PC-9 (cell line): ENCODE measurements at regions of chr1 and their contacts with region 1.

Region 1: GRCh38 chr1:172826096-172826743 is 167.3 kb downstream of the FASLG start:
- DNase-seq: peak; percentile 10 to 51
- H3K4me3 ChIP-seq: no peak overlapping the region
- H3K27ac ChIP-seq: no peak overlapping the region
- H3K4me1 ChIP-seq: no peaks in the 10 kb centered on the region
- H3K27me3 ChIP-seq: no peaks in the 10 kb centered on the region
- CTCF ChIP-seq: peak; percentile 76

Region 2: DNA sequence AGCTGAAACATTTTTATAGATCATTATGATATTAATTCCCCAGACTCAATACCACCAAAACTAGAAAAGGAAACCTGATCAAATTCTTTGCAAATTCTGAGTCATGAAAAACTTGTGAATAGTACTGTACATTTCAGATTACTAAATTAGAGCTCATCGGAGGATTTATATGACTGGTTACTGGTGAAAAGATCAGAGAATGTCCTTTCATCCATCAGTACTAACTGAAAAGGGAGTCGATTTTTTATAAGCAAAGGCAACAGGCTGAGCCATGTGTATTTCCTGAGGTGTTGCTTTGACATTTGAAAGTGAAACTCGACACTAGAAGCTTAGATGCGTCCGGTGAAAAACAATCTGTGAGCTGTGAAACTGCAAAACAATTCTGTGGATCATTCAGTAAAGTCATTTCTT is 68.8 kb after region 1 on chr1:
- CTCF ChIA-PET with region 1: interaction called, 3 read pairs
- POLR2A ChIA-PET with region 1: interaction called, 4 read pairs
- intact Hi-C with region 1: loop called (anchors 5 kb)
- DNase-seq: no peak
- H3K4me3 ChIP-seq: no peak overlapping the region
- H3K27ac ChIP-seq: peak overlapping the region; percentile 18; the same call in 1 of the 2 replicates
- H3K4me1 ChIP-seq: peaks cover 45% of the 10 kb centered on the region
- H3K27me3 ChIP-seq: no peaks in the 10 kb centered on the region
- CTCF ChIP-seq: no peak

Region 3: DNA sequence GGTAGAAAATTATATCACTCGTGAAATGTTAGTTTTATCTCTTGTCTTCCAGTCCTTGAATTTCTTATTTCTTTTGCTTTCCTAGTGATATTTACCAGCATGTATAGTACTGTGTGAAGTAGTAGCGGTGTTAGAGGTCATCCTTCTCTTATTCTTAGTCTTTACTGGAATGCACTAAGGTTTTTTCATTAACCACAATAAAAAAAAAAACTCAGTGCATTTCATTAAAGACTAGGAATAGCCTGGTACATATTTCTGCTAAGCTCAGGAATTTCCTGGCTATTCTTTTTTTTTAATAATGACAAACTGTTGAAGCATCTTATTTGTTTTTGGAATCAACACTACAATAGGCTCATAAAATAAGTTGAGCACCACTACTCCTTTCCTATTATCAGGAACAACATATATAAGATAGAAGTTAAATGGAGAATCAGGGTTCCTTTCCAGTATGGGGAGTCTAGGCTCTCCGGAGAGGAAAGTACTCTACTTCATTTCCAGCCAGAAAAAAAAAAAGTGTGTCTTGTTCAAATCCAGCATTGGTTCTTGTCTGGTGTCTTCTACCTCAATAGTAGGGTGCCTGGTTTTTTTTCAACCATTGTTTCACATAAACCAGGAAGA is 164.5 kb after region 1 on chr1:
- CTCF ChIA-PET with region 1: no interaction called
- POLR2A ChIA-PET with region 1: no interaction called
- intact Hi-C with region 1: loop called (anchors 2 kb)
- DNase-seq: no peak
- H3K4me3 ChIP-seq: no peak overlapping the region
- H3K27ac ChIP-seq: no peak overlapping the region
- H3K4me1 ChIP-seq: no peaks in the 10 kb centered on the region
- H3K27me3 ChIP-seq: no peaks in the 10 kb centered on the region
- CTCF ChIP-seq: no peak

Region 4: DNA sequence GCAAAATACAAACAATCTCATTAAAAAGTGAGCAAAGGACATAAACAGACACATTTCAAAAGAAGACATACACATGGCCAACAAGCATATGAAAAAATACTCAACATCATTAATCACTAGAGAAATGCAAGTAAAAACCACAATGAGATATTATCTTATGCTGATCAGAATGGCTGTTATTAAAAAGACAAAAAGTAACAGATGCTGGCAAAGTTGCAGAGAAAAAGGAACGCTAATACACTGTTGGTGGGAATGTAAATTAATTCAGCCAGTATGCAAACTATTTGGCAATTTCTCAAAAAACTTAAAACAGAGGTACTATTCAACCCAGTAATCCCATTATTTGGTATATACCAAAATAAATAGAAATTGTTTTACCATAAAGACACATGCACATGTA is 256.7 kb after region 1 on chr1:
- CTCF ChIA-PET with region 1: no interaction called
- POLR2A ChIA-PET with region 1: interaction called, 13 read pairs
- intact Hi-C with region 1: no loop called
- DNase-seq: no peak
- H3K4me3 ChIP-seq: no peak overlapping the region
- H3K27ac ChIP-seq: no peak overlapping the region
- H3K4me1 ChIP-seq: no peaks in the 10 kb centered on the region
- H3K27me3 ChIP-seq: no peaks in the 10 kb centered on the region
- CTCF ChIP-seq: no peak

Region 5: GRCh38 chr1:173202430-173203145 is 376.4 kb after region 1 on chr1:
- CTCF ChIA-PET with region 1: interaction called, 23 read pairs
- POLR2A ChIA-PET with region 1: interaction called, 4 read pairs
- intact Hi-C with region 1: loop called (anchors 1 kb)
- DNase-seq: peak in 1 of 2 experiments; percentile 33
- H3K4me3 ChIP-seq: no peak overlapping the region
- H3K27ac ChIP-seq: no peak overlapping the region
- H3K4me1 ChIP-seq: no peaks in the 10 kb centered on the region
- H3K27me3 ChIP-seq: no peaks in the 10 kb centered on the region
- CTCF ChIP-seq: peak; percentile 78

Region 6: DNA sequence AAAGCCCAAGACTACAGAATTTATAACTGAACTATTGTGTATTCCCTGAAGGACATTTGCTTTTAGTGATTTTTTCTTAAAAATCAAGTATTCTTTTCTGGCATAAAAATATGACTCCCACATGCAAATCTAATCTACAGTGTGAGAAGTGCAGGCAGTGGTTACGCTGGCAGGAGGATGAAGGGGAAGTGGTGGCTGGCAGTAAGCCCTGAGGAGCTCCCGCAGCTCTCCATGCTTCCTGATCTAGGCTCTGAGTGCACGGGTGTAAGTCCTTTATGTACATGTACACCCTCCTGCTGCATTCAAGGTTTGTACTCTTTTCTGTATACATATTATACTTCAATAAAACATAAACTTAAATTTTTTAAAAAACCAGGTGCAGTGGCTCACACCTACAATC is 583.4 kb after region 1 on chr1:
- CTCF ChIA-PET with region 1: no interaction called
- POLR2A ChIA-PET with region 1: no interaction called
- intact Hi-C with region 1: loop called (anchors 5 kb)
- DNase-seq: no peak
- H3K4me3 ChIP-seq: no peak overlapping the region
- H3K27ac ChIP-seq: no peak overlapping the region
- H3K4me1 ChIP-seq: peaks cover 22% of the 10 kb centered on the region
- H3K27me3 ChIP-seq: no peaks in the 10 kb centered on the region
- CTCF ChIP-seq: no peak

Region 7: DNA sequence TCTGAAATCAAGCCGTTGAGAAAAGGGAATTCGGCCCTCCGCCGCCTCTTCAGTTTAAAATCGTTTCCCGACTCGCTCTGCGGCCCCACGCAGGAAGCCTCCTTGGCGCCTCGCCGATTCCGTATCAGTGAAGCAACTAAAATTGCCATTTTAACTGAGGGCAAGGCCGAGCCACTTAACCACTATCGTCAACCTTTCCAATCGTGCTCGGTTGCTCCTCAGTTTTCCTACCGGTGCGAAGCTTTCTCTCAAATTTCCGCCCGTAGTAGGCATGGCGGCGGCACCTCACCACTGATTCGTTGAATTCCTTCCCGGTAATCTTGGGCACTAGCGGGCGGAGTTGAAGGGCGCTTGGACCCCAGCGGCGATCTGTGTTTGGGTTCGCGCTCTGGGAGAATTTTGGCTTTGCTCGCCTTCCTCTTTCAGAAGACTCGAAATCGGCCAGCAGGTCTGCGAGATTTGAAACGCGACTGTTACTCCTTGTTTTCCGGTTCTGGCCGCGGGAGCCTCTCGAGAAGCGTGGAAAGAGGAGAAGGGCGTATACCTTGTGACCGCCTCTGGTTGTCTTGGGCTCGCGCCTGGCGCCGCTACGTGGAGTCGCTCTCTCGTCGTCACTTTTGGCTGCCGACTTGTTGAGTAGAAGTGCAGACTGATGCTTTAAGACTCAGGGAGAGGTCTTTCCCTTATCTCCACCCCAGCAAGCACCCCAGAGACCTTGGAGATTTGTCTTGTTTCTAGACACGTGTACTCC is 998.3 kb after region 1 on chr1 and contains the starts of genes CENPL and DARS2:
- CTCF ChIA-PET with region 1: no interaction called
- POLR2A ChIA-PET with region 1: no interaction called
- intact Hi-C with region 1: loop called (anchors 2 kb)
- DNase-seq: peak; percentile 86 to 90
- H3K4me3 ChIP-seq: peak within 1 kb of the TSS; percentile 84
- H3K27ac ChIP-seq: peak within 1 kb of the TSS; percentile 95
- H3K4me1 ChIP-seq: peaks cover 17% of the 10 kb centered on the region
- H3K27me3 ChIP-seq: no peaks in the 10 kb centered on the region
- CTCF ChIP-seq: no peak
- total RNA-seq, gene CENPL: 14.4 and 19.5 TPM in 2 replicates
- total RNA-seq, gene DARS2: 15.0 and 18.3 TPM in 2 replicates